Activated B cell treated with CpG ODN at 0.5 μM for 24 hours (primary cell): ENCODE measurements at regions of chr3 and their contacts with region 1.

Region 1: GRCh38 chr3:114994554-114995341 is 152.3 kb downstream of the ZBTB20 start:
- DNase-seq: no peak
- ATAC-seq: no peak
- H3K4me3 Mint-ChIP-seq: no peak overlapping the region
- H3K27ac Mint-ChIP-seq: no peak overlapping the region
- H3K4me1 Mint-ChIP-seq: peaks cover 4% of the 10 kb centered on the region
- H3K27me3 Mint-ChIP-seq: no peaks in the 10 kb centered on the region
- CTCF ChIP-seq: no peak

Region 2: GRCh38 chr3:114542359-114542758 is 452.4 kb before region 1 on chr3:
- CTCF ChIA-PET with region 1: no interaction called
- POLR2A ChIA-PET with region 1: no interaction called
- intact Hi-C with region 1: no loop called
- DNase-seq: no peak
- ATAC-seq: no peak
- H3K4me3 Mint-ChIP-seq: no peak overlapping the region
- H3K27ac Mint-ChIP-seq: no peak overlapping the region
- H3K4me1 Mint-ChIP-seq: peaks cover 16% of the 10 kb centered on the region
- H3K27me3 Mint-ChIP-seq: no peaks in the 10 kb centered on the region
- CTCF ChIP-seq: no peak

Region 3: DNA sequence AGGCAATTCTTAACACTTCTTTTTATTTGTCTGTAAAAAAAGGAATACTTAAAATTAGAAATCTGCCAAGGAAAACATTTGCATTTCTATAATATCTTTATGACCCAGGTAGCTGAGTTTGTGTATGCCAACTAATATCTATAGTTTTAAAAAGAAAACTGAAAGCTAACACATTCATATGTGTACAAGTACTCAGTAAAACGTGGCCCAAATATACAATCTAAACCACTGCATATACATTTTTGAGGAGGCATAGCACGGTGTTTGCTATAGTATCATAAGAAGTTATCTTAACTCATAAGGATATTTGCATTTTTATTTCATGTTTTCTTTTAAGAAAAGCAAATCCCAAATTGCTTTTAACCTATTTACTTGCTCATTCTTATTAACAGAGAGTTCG is 20.4 kb before region 1 on chr3:
- CTCF ChIA-PET with region 1: no interaction called
- POLR2A ChIA-PET with region 1: no interaction called
- intact Hi-C with region 1: loop called (anchors 2 kb)
- DNase-seq: no peak
- ATAC-seq: no peak
- H3K4me3 Mint-ChIP-seq: no peak overlapping the region
- H3K27ac Mint-ChIP-seq: no peak overlapping the region
- H3K4me1 Mint-ChIP-seq: peaks cover 3% of the 10 kb centered on the region
- H3K27me3 Mint-ChIP-seq: no peaks in the 10 kb centered on the region
- CTCF ChIP-seq: no peak